BJ (cell line): ENCODE measurements at regions of chr4 and their contacts with region 1.

Region 1: GRCh38 chr4:147518846-147519767 is 38.2 kb downstream of the EDNRA start:
- DNase-seq: no peak
- H3K4me3 ChIP-seq: no peak overlapping the region
- H3K27me3 ChIP-seq: no peaks in the 10 kb centered on the region
- CTCF ChIP-seq: peak; percentile 95

Region 2: GRCh38 chr4:146844761-146845160 is 674.3 kb before region 1 on chr4:
- CTCF ChIA-PET with region 1: no interaction called
- POLR2A ChIA-PET with region 1: no interaction called
- DNase-seq: no peak
- H3K4me3 ChIP-seq: no peak overlapping the region
- H3K27me3 ChIP-seq: no peaks in the 10 kb centered on the region
- CTCF ChIP-seq: no peak

Region 3: GRCh38 chr4:147160908-147161513 is 358.1 kb before region 1 on chr4:
- CTCF ChIA-PET with region 1: interaction called, 10 read pairs
- POLR2A ChIA-PET with region 1: no interaction called
- DNase-seq: peak; percentile 5
- H3K4me3 ChIP-seq: no peak overlapping the region
- H3K27me3 ChIP-seq: no peaks in the 10 kb centered on the region
- CTCF ChIP-seq: peak; percentile 84

Region 4: DNA sequence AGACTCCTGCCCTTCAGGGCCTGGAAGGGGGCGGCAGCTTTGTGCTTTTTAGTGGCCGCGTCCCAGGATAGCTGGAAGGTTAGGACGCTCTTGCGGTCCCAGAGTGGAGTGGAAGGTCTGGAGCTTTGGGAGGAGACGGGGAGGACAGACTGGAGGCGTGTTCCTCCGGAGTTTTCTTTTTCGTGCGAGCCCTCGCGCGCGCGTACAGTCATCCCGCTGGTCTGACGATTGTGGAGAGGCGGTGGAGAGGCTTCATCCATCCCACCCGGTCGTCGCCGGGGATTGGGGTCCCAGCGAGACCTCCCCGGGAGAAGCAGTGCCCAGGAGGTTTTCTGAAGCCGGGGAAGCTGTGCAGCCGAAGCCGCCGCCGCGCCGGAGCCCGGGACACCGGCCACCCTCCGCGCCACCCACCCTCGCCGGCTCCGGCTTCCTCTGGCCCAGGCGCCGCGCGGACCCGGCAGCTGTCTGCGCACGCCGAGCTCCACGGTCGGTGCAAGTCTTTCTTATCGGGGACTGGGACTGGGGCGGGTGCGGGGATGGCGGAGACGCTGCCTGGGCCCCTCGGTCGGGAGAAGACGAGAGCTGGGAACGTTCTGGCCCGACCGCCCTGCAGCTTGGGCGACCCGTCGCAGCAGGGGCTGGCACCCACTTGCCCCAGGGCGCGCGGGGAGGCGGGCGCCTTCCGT is 38.1 kb before region 1 on chr4 and contains the start of gene EDNRA:
- CTCF ChIA-PET with region 1: no interaction called
- POLR2A ChIA-PET with region 1: no interaction called
- DNase-seq: no peak
- H3K4me3 ChIP-seq: peak within 1 kb of the TSS; percentile 61
- H3K27me3 ChIP-seq: no peaks in the 10 kb centered on the region
- CTCF ChIP-seq: no peak
- polyA plus RNA-seq, gene EDNRA: 7.6 and 12.0 TPM in 2 replicates

Region 5: GRCh38 chr4:147550626-147551250 is 31.6 kb after region 1 on chr4:
- CTCF ChIA-PET with region 1: interaction called, 17 read pairs
- POLR2A ChIA-PET with region 1: no interaction called
- DNase-seq: peak; percentile 41
- H3K4me3 ChIP-seq: no peak overlapping the region; the same call in 1 of the 2 replicates
- H3K27me3 ChIP-seq: no peaks in the 10 kb centered on the region
- CTCF ChIP-seq: no peak

Region 6: GRCh38 chr4:147570616-147571015 is 51.5 kb after region 1 on chr4:
- CTCF ChIA-PET with region 1: interaction called, 11 read pairs
- POLR2A ChIA-PET with region 1: no interaction called
- DNase-seq: no peak
- H3K4me3 ChIP-seq: no peak overlapping the region
- H3K27me3 ChIP-seq: no peaks in the 10 kb centered on the region
- CTCF ChIP-seq: peak; percentile 22; the same call in 1 of the 2 replicates

Region 7: DNA sequence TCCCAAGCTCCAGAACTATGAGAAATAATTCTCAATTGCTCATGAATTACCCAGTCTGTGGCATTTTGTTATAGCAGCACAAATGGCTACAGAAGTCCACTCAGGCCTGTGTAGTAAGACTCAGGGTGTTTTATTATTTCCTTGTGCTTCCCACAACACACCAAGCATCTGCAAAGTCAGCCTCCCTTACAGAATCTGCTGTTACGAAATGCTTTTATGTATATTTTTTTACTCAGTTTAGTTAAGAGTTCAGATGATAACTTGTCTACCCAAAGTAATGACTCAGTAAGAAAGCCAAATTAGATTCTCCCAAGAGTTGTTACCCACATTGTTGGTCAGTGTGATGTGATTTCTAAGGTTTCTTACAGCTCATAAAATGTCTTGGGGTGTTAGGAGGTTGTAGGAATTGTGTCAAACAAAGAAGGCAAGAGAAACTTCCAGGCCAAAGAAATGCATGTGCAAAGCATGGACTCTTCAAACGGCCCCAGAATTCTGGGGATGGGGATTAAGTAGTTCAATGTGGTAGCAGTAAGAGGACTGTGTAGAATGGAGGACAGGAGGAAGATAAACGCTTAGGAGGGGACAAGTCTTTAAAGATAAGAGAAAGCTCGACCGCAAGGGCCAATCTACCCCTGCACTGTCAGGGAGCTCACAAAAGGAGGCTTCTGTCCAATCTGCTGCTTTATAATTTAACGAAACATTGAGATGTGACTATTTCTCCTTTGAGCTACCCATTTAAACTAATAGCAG is 62.7 kb after region 1 on chr4:
- CTCF ChIA-PET with region 1: interaction called, 19 read pairs
- POLR2A ChIA-PET with region 1: no interaction called
- DNase-seq: peak; percentile 51
- H3K4me3 ChIP-seq: no peak overlapping the region
- H3K27me3 ChIP-seq: no peaks in the 10 kb centered on the region
- CTCF ChIP-seq: no peak

Region 8: GRCh38 chr4:147590249-147590920 is 71.3 kb after region 1 on chr4:
- CTCF ChIA-PET with region 1: interaction called, 25 read pairs
- POLR2A ChIA-PET with region 1: no interaction called
- DNase-seq: no peak
- H3K4me3 ChIP-seq: no peak overlapping the region
- H3K27me3 ChIP-seq: no peaks in the 10 kb centered on the region
- CTCF ChIP-seq: peak; percentile 71

Region 9: DNA sequence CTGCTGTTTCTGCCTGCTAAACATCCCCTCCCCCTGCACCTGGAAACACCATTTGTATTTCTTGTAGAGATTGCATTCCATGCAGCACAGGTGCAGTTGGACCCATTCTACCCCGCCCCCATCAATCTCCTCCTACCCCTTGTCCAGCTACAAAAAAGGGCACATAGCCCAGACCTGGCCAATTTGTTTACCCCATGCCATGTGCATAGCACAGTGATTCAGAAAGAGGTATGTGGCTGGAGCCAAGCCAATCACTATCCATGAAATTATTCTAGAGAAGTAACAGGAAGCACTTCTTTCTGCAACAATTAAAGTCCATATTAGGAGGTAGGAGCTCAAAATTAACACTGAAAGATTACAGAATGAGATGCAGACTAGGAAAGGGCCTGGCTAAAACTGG is 77.9 kb after region 1 on chr4:
- CTCF ChIA-PET with region 1: interaction called, 10 read pairs
- POLR2A ChIA-PET with region 1: no interaction called
- DNase-seq: peak; percentile 67
- H3K4me3 ChIP-seq: no peak overlapping the region
- H3K27me3 ChIP-seq: no peaks in the 10 kb centered on the region
- CTCF ChIP-seq: no peak